Calu3 (cell line): ENCODE measurements at regions of chr3 and their contacts with region 1.

Region 1: GRCh38 chr3:24389108-24390090 is 105.3 kb downstream of the THRB start:
- DNase-seq: no peak
- H3K4me3 Mint-ChIP-seq: no peak overlapping the region
- H3K27ac Mint-ChIP-seq: no peak overlapping the region
- H3K4me1 Mint-ChIP-seq: no peaks in the 10 kb centered on the region
- H3K27me3 Mint-ChIP-seq: no peaks in the 10 kb centered on the region
- CTCF ChIP-seq: no peak

Region 2: GRCh38 chr3:24446032-24446431 is 56.6 kb after region 1 on chr3:
- CTCF ChIA-PET with region 1: no interaction called
- intact Hi-C with region 1: loop called (anchors 5 kb)
- DNase-seq: no peak
- H3K4me3 Mint-ChIP-seq: no peak overlapping the region
- H3K27ac Mint-ChIP-seq: no peak overlapping the region
- H3K4me1 Mint-ChIP-seq: peaks cover 18% of the 10 kb centered on the region
- H3K27me3 Mint-ChIP-seq: no peaks in the 10 kb centered on the region
- CTCF ChIP-seq: no peak

Region 3: GRCh38 chr3:24521420-24522145 is 132.2 kb after region 1 on chr3:
- CTCF ChIA-PET with region 1: no interaction called
- intact Hi-C with region 1: no loop called
- DNase-seq: peak; percentile 59
- H3K4me3 Mint-ChIP-seq: peak overlapping the region; percentile 67
- H3K27ac Mint-ChIP-seq: no peak overlapping the region
- H3K4me1 Mint-ChIP-seq: peaks cover 47% of the 10 kb centered on the region
- H3K27me3 Mint-ChIP-seq: no peaks in the 10 kb centered on the region
- CTCF ChIP-seq: no peak